HEK293T (cell line): ENCODE measurements at regions of chr13 and their contacts with region 1.

Region 1: GRCh38 chr13:79668201-79668752 is 187.3 kb downstream of the NDFIP2 start:
- DNase-seq: no peak

Region 2: GRCh38 chr13:79679334-79679733 is 11.1 kb after region 1 on chr13:
- CTCF ChIA-PET with region 1: interaction called, 13 read pairs
- POLR2A ChIA-PET with region 1: no interaction called
- DNase-seq: peak; percentile 75